Activated CD4-positive, alpha-beta memory T cell treated with anti-CD3 and anti-CD28 coated beads for 36 hours (primary cell): ENCODE measurements at regions of chr1 and their contacts with region 1.

Region 1: GRCh38 chr1:92623187-92623778 is 136.6 kb upstream of the GFI1 start:
- DNase-seq: no peak
- H3K4me3 Mint-ChIP-seq: no peak overlapping the region
- H3K27ac Mint-ChIP-seq: no peak overlapping the region
- H3K4me1 Mint-ChIP-seq: peaks cover 11% of the 10 kb centered on the region
- H3K27me3 Mint-ChIP-seq: no peaks in the 10 kb centered on the region

Region 2: DNA sequence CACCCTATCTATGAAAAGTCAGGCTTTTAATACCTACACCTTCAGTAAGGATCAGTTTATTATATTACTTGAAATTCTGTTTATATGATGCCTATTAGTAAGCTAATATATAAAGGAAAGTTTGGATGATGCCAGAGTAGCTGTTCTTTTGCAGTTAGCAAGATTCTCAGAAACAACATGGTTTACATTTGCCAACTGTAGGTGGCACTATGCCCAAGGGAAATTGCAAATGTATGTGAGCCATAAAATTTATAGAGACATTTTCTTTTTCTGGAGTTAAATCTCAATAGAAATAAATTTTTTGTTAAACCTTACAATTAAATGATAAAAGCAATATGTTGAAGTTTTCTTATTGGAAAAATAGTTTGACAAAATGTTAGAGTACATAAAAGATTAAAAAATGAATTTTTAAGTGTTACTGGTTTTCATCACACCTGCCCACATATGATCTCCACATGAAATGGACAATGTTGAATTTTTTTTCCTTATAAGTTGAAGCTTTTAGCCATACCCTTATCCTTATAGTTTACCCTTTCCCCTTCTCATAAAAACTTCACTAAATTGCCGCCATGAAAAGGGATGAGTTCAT is 625.6 kb before region 1 on chr1:
- CTCF ChIA-PET with region 1: interaction called, 14 read pairs
- POLR2A ChIA-PET with region 1: no interaction called
- intact Hi-C with region 1: loop called (anchors 1 kb)
- DNase-seq: peak; percentile 31
- H3K4me3 Mint-ChIP-seq: no peak overlapping the region
- H3K27ac Mint-ChIP-seq: no peak overlapping the region
- H3K4me1 Mint-ChIP-seq: no peaks in the 10 kb centered on the region
- H3K27me3 Mint-ChIP-seq: no peaks in the 10 kb centered on the region

Region 3: GRCh38 chr1:92310185-92310597 is 313.1 kb before region 1 on chr1:
- CTCF ChIA-PET with region 1: interaction called, 32 read pairs
- POLR2A ChIA-PET with region 1: interaction called, 3 read pairs
- intact Hi-C with region 1: loop called (anchors 1 kb)
- DNase-seq: no peak
- H3K4me3 Mint-ChIP-seq: no peak overlapping the region
- H3K27ac Mint-ChIP-seq: no peak overlapping the region
- H3K4me1 Mint-ChIP-seq: peaks cover 39% of the 10 kb centered on the region
- H3K27me3 Mint-ChIP-seq: no peaks in the 10 kb centered on the region